ENCODE measurements at regions of chr7 and their contacts with region 1.

Region 1: DNA sequence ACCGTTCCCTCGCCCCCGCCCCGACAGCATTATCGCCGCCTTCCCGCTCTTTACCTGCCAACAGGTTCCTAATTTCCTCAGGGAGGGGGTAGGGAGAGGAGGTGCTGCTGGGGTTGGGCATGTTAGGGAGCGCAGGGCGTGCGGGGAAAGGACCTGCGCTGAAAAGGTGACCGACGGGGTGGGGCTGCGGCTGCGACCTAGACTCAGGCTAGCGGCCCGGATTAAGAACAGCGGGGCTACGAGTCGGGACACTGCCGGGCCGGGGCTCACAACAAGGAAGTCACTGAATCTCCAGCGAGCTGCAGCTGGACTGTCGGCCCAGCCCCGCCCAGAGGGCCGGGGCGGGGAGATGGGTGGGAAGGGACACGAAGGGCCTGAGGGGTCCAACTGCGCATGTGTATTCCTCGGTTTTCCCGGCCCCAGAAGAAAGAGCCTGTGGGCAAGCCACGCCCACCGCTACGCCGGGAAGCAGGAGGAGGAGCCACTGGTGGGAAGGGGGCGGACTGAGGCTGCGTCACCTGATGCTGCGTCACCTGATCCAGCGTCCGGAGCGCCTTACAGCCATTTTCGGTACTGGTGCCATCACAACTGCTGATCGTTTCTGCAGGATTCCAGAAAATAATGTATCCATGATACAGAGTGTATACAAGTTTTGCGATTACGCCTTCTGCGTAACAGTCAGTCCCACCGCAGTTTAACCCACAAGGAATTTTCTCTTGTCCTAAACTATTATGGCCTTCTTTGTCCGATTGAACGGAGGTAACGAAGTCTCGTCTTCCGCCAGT is at the start of gene SKAP2:
- DNase-seq: peak; percentile 100
- H3K4me3 Mint-ChIP-seq: peak within 1 kb of the TSS; percentile 94
- H3K27ac Mint-ChIP-seq: peak within 1 kb of the TSS; percentile 95
- H3K4me1 Mint-ChIP-seq: peaks cover 23% of the 10 kb centered on the region
- H3K27me3 Mint-ChIP-seq: no peaks in the 10 kb centered on the region
- CTCF ChIP-seq: no peak
- total RNA-seq, gene SKAP2: 68.1 and 83.1 TPM in 2 replicates

Region 2: GRCh38 chr7:26216049-26216448 is 648.5 kb before region 1 on chr7:
- CTCF ChIA-PET with region 1: no interaction called
- intact Hi-C with region 1: no loop called
- DNase-seq: no peak
- H3K4me3 Mint-ChIP-seq: no peak overlapping the region
- H3K27ac Mint-ChIP-seq: no peak overlapping the region
- H3K4me1 Mint-ChIP-seq: no peaks in the 10 kb centered on the region
- H3K27me3 Mint-ChIP-seq: no peaks in the 10 kb centered on the region
- CTCF ChIP-seq: no peak

Region 3: GRCh38 chr7:26965724-26966123 is 101.2 kb after region 1 on chr7:
- CTCF ChIA-PET with region 1: no interaction called
- intact Hi-C with region 1: loop called (anchors 5 kb)
- DNase-seq: peak; percentile 16
- H3K4me3 Mint-ChIP-seq: no peak overlapping the region
- H3K27ac Mint-ChIP-seq: no peak overlapping the region
- H3K4me1 Mint-ChIP-seq: no peaks in the 10 kb centered on the region
- H3K27me3 Mint-ChIP-seq: no peaks in the 10 kb centered on the region
- CTCF ChIP-seq: no peak

Region 4: GRCh38 chr7:27031289-27032172 is 167.0 kb after region 1 on chr7:
- CTCF ChIA-PET with region 1: interaction called, 3 read pairs
- intact Hi-C with region 1: loop called (anchors 5 kb)
- DNase-seq: no peak
- H3K4me3 Mint-ChIP-seq: no peak overlapping the region
- H3K27ac Mint-ChIP-seq: peak overlapping the region; percentile 69
- H3K4me1 Mint-ChIP-seq: peaks cover 31% of the 10 kb centered on the region
- H3K27me3 Mint-ChIP-seq: no peaks in the 10 kb centered on the region
- CTCF ChIP-seq: no peak

Region 5: GRCh38 chr7:27124096-27124901 is 259.8 kb after region 1 on chr7:
- CTCF ChIA-PET with region 1: interaction called, 14 read pairs
- intact Hi-C with region 1: no loop called
- DNase-seq: no peak
- H3K4me3 Mint-ChIP-seq: peak overlapping the region; percentile 83
- H3K27ac Mint-ChIP-seq: no peak overlapping the region
- H3K4me1 Mint-ChIP-seq: peaks cover 63% of the 10 kb centered on the region
- H3K27me3 Mint-ChIP-seq: no peaks in the 10 kb centered on the region
- CTCF ChIP-seq: no peak